ENCODE measurements at regions of chr2 and their contacts with region 1.

Region 1: DNA sequence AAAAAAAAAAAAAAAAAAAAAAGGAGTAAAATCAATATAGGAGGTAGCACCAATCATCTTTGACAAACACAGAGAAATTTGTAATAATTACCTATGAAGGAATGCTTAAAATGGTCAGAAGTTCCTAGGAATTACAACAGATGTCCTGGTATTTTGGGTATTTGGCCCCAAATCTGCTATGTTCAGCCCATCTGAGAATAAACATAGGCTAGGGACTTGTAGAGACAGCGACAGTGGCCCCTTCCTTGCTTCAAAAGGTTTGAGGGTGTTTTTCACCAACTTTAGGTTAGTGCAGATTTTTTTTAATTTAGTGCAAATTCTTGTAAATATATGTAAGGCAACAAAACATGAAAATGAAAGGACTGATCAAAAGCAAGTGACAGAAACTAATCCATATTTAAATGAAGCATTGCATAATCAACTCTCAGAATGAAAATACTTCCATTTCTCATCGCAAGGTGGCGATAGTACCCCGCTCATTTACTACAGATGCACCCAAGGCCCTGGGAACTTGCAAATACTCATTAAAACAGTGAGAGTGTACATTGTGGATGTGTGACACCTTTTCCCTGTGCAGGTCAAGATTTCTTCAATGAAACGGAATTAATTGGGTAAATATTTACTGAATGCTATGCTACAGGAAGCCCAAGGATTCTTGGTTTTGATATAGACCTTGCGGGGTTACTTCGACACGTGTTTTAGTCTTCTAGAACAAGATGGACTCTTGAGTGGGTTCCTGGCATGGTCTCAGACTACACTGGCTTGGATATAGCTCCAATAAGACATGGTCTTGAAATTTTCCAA is 44.6 kb downstream of the FAM124B start:
- DNase-seq: peak; percentile 72
- H3K4me3 Mint-ChIP-seq: no peak overlapping the region
- H3K27ac Mint-ChIP-seq: no peak overlapping the region
- H3K4me1 Mint-ChIP-seq: peaks cover 7% of the 10 kb centered on the region
- H3K27me3 Mint-ChIP-seq: peaks cover 26% of the 10 kb centered on the region
- CTCF ChIP-seq: peak; percentile 80

Region 2: DNA sequence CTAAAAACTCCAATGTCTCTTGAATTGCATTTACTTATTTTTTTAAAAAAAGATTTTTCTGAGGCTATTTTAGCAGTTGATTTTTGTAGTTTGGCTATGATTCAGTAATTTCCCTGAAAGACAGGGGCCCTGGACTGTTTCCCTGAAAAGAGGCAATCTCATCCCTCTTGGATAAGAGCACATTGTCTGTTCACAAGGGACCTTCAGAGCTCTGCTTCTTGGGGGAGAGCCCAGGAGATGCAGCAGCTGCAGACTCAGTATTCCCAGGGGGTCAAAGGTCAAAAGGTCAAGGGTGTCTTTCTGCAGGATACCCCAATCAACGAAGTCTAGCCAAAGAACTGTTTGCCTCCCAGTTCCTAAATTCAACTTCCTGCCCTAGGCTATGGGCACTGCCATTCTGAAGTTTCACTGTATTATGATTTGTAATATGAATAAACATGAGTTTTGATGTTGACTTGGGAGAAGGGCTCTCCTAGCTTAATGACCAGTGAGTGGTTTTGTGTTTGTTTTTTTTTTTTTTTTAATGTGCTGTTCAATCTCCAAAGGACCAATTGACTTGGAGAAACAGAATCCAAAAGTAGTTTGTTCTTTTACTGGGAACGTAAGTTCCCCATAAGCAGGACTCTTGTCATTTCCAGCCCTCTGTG is 161.3 kb before region 1 on chr2:
- CTCF ChIA-PET with region 1: no interaction called
- POLR2A ChIA-PET with region 1: no interaction called
- intact Hi-C with region 1: no loop called
- DNase-seq: no peak
- H3K4me3 Mint-ChIP-seq: no peak overlapping the region
- H3K27ac Mint-ChIP-seq: no peak overlapping the region
- H3K4me1 Mint-ChIP-seq: peaks cover 6% of the 10 kb centered on the region
- H3K27me3 Mint-ChIP-seq: no peaks in the 10 kb centered on the region
- CTCF ChIP-seq: no peak

Region 3: GRCh38 chr2:224308272-224308911 is 48.9 kb before region 1 on chr2:
- CTCF ChIA-PET with region 1: no interaction called
- POLR2A ChIA-PET with region 1: no interaction called
- intact Hi-C with region 1: no loop called
- DNase-seq: no peak
- H3K4me3 Mint-ChIP-seq: no peak overlapping the region
- H3K27ac Mint-ChIP-seq: no peak overlapping the region
- H3K4me1 Mint-ChIP-seq: no peaks in the 10 kb centered on the region
- H3K27me3 Mint-ChIP-seq: no peaks in the 10 kb centered on the region
- CTCF ChIP-seq: no peak

Region 4: DNA sequence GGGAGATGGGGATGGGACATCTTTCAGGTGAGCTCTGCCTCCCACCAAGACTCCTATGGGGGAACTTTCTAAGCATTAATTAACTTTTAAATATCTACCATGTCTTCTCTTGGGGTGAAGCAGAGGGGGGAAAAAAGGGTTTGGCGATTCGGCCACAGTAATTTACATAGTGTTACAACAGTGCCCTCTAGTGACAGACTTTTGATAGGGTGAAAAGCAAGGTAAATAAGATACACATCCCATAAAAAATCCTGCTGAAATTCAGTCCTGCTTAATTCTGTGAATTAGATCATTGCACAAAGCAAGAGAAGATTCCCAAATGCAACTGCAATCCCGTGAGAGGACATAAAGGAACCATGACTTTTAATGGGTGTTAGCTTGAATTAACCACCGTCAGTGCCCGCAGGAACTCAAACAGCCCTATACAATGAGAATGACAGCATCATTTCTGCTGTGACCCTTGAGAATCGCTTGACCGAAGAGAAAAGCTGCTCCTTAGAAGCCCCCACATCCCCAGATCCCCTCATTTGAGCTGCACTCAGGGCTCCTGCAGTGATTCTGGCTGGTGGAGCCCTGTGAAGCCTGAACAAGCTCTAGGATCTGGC is 11.8 kb after region 1 on chr2:
- CTCF ChIA-PET with region 1: interaction called, 13 read pairs
- POLR2A ChIA-PET with region 1: interaction called, 4 read pairs
- intact Hi-C with region 1: no loop called
- DNase-seq: peak; percentile 66
- H3K4me3 Mint-ChIP-seq: no peak overlapping the region
- H3K27ac Mint-ChIP-seq: no peak overlapping the region
- H3K4me1 Mint-ChIP-seq: peaks cover 6% of the 10 kb centered on the region
- H3K27me3 Mint-ChIP-seq: no peaks in the 10 kb centered on the region
- CTCF ChIP-seq: peak; percentile 61

Region 5: DNA sequence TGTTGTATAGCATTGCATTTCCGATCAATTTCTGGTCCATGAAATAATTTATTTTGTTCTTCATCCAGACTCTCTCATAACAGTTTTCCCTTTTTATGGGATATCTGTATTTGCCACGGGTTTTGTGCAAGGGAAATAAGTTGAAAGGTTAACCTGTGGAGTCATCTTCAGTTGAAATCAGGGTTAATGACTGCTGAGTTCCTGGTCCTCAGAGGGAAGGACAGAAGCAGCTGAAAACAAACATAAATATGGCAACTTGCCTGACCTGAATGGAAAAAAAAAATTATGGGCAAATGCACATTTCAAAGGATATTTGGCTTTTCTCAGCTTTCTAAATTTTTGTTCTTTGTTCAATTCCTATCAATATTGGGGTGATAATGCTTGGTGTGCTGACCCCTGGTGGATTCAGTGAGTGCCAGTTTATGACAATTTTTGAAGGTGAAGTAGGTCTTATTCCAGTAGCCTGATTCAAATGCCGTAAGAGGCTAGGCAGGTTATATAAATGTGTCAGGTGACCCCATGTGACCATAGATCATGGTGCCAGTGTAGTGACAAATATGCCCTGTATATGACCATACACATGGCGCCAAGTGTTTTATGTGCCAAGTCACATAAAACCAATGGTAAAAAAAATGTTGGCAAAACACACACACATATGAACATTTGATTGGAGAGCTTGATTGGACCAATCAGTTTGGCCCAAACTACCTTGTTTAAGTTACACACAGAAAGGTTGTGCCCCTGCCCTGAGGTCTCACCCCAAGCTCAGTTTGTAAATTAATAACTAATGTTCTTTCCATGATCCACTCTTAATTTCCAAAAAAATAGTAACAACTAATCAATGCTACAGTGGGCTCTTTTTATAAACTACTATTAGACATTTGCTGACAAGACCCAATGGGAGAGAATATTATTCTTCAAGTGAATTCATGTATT is 92.2 kb after region 1 on chr2:
- CTCF ChIA-PET with region 1: interaction called, 9 read pairs
- POLR2A ChIA-PET with region 1: no interaction called
- intact Hi-C with region 1: loop called (anchors 1 kb)
- DNase-seq: peak; percentile 43
- H3K4me3 Mint-ChIP-seq: no peak overlapping the region
- H3K27ac Mint-ChIP-seq: no peak overlapping the region
- H3K4me1 Mint-ChIP-seq: no peaks in the 10 kb centered on the region
- H3K27me3 Mint-ChIP-seq: no peaks in the 10 kb centered on the region
- CTCF ChIP-seq: peak; percentile 50

Region 6: DNA sequence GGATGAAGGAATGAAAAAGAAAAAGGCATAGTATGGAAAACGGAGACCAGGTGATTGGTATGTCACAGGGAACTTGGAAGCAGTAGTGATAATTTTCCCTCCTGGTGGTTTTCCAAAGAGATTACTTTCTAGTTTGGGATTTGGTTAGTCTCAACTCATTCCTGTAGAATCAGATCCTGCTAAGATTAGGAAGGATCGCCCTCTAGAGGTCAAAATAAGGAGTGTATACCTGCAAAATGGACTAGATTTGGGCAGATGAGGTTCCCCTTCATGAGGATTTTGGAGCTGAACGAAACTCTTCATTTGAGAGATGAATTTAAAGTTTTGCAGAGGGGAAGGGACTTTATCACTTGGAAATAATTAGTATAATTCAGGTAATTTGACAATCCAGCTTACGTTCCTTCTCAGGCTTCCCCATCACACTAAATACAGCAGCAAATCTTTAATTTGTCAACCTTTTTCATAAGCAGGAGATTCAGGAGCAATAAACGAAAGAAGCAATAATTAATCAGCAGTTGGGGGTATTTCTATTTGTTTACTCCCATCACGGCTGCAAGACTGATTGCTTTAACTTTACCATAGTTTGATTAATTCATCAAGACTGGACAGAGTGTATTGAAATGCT is 293.6 kb after region 1 on chr2:
- CTCF ChIA-PET with region 1: interaction called, 33 read pairs
- POLR2A ChIA-PET with region 1: no interaction called
- intact Hi-C with region 1: loop called (anchors 1 kb)
- DNase-seq: peak; percentile 70
- H3K4me3 Mint-ChIP-seq: no peak overlapping the region
- H3K27ac Mint-ChIP-seq: no peak overlapping the region
- H3K4me1 Mint-ChIP-seq: peaks cover 8% of the 10 kb centered on the region
- H3K27me3 Mint-ChIP-seq: peaks cover 9% of the 10 kb centered on the region
- CTCF ChIP-seq: peak; percentile 64

Region 7: GRCh38 chr2:224778474-224778877 is 421.2 kb after region 1 on chr2:
- CTCF ChIA-PET with region 1: interaction called, 19 read pairs
- POLR2A ChIA-PET with region 1: no interaction called
- intact Hi-C with region 1: loop called (anchors 1 kb)
- DNase-seq: peak; percentile 75
- H3K4me3 Mint-ChIP-seq: no peak overlapping the region
- H3K27ac Mint-ChIP-seq: no peak overlapping the region
- H3K4me1 Mint-ChIP-seq: peaks cover 4% of the 10 kb centered on the region
- H3K27me3 Mint-ChIP-seq: no peaks in the 10 kb centered on the region
- CTCF ChIP-seq: peak; percentile 50

Region 8: GRCh38 chr2:225112362-225113126 is 755.2 kb after region 1 on chr2:
- CTCF ChIA-PET with region 1: no interaction called
- POLR2A ChIA-PET with region 1: no interaction called
- intact Hi-C with region 1: loop called (anchors 10 kb)
- DNase-seq: no peak
- H3K4me3 Mint-ChIP-seq: no peak overlapping the region
- H3K27ac Mint-ChIP-seq: no peak overlapping the region
- H3K4me1 Mint-ChIP-seq: no peaks in the 10 kb centered on the region
- H3K27me3 Mint-ChIP-seq: no peaks in the 10 kb centered on the region
- CTCF ChIP-seq: no peak